GM18951 (cell line): ENCODE measurements at regions of chr20 and their contacts with region 1.

Region 1: GRCh38 chr20:17619351-17620093 is 49.6 kb downstream of the DSTN start:
- POLR2A ChIP-seq: no peak

Region 2: DNA sequence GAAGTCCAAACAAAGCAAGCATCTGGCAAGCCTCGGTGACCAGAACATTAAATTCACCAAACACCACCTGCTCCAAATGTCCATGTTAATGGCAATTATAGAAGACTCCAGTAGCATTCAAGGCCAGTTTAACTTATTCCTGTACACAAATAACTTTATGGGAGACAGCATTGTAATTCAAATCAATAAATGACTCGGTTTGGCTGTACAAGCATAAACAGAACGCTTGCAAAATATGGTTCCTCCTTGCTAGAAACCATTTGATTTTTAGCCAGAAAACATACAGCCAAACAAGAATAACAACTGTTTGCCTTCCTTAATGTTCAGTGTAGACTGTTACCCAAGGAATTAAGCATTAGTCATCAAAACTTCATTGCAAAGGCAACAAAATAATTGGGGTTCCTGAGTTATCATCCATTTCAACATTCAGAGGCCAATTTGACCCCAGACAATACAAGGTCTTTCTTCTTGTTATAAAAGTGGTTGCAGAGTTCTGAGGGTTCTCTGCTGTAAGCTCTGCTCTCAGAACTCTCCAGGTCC is 213.4 kb before region 1 on chr20:
- in situ Hi-C with region 1: no loop called
- POLR2A ChIP-seq: no peak

Region 3: DNA sequence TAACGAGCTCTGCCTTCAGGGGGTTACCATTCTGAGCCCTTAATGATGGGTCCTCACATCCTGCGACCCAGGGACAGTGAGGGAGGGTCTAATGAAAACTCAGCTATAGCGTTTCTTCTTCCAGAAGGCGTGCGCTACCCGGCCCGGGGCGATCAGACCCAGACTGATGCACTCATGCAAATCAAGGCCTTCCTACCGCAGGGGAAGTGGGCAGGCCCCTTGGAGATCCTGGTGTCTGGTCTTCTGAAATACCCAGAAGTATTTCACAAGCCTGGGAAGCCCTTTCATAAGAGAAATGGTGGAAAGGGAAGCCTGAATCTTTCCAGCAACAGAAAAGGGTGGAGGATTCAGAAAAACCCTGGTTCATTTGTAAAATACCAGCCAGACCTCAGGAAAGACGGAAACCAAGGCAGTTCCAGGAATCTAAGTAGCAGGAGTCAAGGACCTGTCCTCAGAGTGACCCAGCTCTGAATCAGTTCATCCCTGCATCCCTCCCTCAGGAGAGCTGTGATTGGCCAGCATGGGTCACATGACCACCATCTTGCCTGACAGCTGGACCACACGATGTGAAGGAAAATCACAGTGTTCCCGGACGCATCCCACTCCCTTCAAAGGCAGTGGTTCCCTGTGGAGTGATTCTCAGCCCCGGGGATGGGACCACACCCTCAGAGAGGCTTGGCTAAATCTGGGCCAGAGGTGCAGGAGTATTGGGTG is 101.0 kb before region 1 on chr20:
- in situ Hi-C with region 1: no loop called
- POLR2A ChIP-seq: no peak

Region 4: GRCh38 chr20:17536944-17537444 is 82.5 kb before region 1 on chr20:
- in situ Hi-C with region 1: loop called (anchors 10 kb)
- POLR2A ChIP-seq: no peak